Activated naive CD4-positive, alpha-beta T cell treated with anti-CD3 and anti-CD28 coated beads for 36 hours (primary cell): ENCODE measurements at regions of chr11 and their contacts with region 1.

Region 1: DNA sequence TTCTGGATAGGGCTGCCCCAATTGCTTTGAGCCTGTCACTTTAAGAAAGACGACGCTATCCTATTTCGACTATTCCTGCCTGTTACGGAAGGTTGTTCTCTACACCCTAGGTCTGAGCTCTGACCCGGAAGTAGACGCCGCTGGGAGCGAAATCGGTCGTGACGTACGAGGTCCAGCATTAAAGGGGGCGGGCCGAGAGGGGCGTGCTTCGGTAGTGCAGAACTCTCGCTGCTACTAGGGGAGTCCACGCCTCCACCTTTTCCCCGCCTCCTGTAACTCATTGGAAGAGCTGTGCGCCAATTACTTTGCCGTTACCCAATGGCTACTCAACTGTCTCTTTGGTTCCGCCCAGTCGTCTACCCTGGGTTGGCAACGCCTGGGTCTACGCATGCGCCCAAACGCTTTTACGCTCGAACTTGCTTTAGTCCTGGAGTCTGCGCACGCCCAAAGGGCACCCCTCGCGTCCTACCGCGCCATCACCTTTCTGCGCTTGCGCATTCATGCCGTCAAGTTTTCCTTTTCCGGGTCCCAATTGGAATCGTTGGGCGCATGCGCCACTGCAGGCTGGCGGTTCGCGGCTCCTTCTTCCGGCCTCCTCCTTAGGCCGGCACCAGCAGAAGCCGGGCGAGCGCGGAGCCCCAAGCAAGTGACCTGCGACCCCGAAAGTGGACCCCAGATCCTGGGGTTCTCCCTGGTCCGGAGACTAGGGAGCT is at the start of gene PCNX3:
- DNase-seq: peak; percentile 100
- H3K4me3 Mint-ChIP-seq: peak within 1 kb of the TSS; percentile 95
- H3K27ac Mint-ChIP-seq: peak within 1 kb of the TSS; percentile 98
- H3K4me1 Mint-ChIP-seq: peaks cover 54% of the 10 kb centered on the region
- H3K27me3 Mint-ChIP-seq: no peaks in the 10 kb centered on the region
- total RNA-seq, gene PCNX3: 21.6 to 24.7 TPM

Region 2: DNA sequence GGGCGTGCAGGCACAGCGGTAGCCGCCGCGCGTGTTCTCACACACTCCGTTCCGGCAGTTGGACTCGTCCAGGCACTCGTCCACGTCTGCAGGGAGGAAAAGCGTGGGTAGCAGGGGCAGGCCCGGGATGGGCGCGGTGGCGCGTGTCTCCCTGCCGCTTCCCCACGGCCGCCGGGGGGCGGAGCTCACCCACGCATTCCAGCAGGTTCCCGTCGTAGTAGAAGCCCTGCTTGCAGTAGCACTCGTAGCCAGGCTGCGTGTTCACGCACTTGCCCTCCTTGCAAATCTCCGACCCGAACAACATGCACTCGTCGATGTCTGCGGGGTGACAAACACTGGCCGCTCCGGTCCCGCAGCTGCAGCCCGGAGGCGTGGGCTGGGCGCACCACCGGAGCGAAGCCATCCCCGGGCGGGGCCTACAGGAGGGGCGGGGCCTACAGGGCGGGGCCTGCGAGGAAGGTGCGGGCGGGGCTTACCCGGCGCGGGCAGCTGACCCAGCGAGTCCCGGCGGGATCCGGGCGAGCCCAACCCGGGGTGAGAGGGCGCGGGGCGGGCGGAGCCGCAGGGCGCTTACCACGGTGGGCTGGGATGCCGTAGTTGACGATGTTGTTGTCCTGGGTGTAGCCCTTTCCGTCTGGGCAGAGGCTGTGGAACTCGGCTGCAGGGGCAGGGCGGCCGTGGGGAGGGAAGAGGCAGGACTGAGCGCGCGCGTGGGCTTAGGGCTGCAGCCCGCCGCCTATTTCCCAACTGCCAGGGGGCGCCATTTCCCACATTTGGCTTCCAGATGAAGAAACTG is 74.9 kb before region 1 on chr11:
- CTCF ChIA-PET with region 1: interaction called, 9 read pairs
- intact Hi-C with region 1: loop called (anchors 1 kb)
- DNase-seq: peak; percentile 93
- H3K4me3 Mint-ChIP-seq: peak overlapping the region; percentile 80
- H3K27ac Mint-ChIP-seq: peak overlapping the region; percentile 82
- H3K4me1 Mint-ChIP-seq: peaks cover 16% of the 10 kb centered on the region
- H3K27me3 Mint-ChIP-seq: no peaks in the 10 kb centered on the region

Region 3: DNA sequence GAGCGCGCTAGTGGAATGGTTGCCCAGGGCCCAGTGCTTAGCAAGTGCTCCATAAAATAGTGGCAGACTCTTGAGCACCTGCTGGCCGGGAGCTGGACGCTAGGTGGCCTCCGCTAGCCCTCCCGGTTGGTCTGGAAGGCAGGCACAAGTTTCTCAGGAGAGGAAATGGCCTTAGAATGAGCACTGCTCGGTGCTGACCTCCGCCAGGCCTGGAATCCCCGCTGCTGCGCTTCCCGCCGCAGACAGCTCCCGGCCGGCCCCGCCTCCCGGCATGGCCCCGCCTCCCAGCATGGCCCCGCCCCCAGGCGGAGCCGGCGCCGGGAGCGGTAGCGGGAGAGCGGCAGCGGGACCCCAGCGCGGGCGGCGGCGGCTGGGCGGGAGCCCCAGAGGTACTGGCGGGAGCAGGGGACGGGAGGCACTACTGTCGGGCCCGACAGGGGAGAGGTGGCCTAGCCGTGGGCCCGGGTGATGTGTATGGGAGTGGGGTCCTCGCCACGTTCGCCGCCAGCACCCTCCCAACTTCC is 22.5 kb after region 1 on chr11 and contains the start of gene SIPA1:
- CTCF ChIA-PET with region 1: interaction called, 4 read pairs
- intact Hi-C with region 1: loop called (anchors 1 kb)
- DNase-seq: peak; percentile 71
- H3K4me3 Mint-ChIP-seq: peak within 1 kb of the TSS; percentile 88
- H3K27ac Mint-ChIP-seq: peak within 1 kb of the TSS; percentile 91
- H3K4me1 Mint-ChIP-seq: peaks cover 44% of the 10 kb centered on the region
- H3K27me3 Mint-ChIP-seq: no peaks in the 10 kb centered on the region
- total RNA-seq, gene SIPA1: 146 to 150 TPM

Region 4: DNA sequence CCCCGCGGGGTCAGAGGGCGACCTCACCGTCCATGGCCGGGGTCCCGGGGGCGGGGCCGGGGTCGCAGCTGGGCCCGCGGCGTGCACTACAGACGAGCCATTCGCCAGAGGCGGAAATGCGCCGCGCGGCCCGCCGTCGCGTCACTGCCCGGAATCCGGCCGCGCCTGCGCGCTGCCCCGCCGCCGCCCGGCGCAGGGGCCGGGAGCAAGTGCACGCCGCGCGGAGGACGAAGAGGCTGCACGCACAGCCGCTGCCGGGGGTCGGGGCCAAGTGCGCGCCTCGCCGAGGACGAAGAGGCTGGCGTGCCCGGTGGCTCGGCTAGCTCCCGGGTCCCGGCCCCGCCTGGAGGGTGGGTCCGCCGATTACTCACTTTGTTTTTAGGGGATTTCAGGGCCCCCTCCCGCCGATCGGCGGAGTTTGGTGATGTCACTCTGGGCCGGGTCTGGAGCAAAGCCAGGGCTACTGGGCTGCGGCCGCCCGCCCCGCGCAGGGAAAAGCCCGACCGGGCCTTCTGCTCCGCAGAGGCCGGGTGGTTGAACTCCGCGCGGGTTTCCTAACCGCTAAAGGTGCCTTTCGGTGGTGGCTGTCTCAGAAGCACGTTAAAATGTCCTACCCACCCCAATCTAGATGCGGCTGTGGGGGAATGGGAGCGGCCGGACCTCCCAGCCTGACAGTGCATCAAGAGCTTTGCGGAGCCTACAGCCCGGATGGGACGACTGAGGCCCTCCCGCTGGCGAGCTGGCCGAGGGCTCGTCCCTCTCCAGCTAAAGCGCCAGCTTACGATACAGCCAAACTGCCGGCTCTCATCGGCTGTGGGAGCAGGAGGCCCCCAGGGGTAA is 47.6 kb after region 1 on chr11 and contains the start of gene RELA:
- CTCF ChIA-PET with region 1: no interaction called
- intact Hi-C with region 1: loop called (anchors 1 kb)
- DNase-seq: peak; percentile 95
- H3K4me3 Mint-ChIP-seq: peak within 1 kb of the TSS; percentile 85
- H3K27ac Mint-ChIP-seq: peak within 1 kb of the TSS; percentile 94
- H3K4me1 Mint-ChIP-seq: peaks cover 37% of the 10 kb centered on the region
- H3K27me3 Mint-ChIP-seq: no peaks in the 10 kb centered on the region
- total RNA-seq, gene RELA: 66.9 to 68.5 TPM

Region 5: DNA sequence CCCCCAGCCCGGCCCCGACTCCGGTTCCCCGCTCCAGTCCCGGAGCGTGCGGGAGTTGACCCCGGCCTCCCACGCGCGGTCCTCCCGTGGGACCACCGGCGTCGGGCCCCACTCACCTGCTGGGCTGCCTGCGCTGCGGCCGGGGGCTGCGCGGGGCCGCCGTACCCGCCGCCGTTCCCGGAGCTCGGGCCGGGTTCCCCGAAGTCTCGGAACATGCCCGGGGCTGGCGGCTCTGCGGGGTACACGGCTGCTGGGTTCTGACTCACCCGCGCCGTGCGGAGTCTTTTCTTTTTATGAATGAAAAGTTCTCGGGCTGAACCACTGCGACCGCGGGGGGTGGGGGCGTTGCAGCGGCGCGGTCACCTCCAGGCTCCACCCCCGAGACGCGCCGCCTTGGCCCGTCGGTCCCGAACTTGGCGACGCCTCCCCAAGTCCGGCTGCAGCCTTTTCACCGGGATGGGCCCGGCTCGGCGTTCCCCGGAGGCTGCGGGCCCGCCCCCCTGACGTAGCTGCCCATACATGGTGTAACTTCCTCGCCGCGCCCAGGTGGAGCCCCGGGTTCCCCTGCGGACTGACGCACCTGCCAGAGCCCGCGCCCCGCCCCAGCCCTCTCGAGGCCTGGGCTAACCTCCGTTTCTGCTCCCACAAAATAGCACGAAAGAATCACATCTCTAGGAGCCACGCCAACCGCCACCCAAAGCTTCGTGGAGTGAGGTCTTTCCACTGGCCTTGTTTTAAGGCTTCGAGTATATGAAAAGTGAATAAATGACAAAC is 284.9 kb after region 1 on chr11 and contains the start of gene FOSL1:
- CTCF ChIA-PET with region 1: no interaction called
- intact Hi-C with region 1: loop called (anchors 1 kb)
- DNase-seq: peak; percentile 96
- H3K4me3 Mint-ChIP-seq: peak within 1 kb of the TSS; percentile 83
- H3K27ac Mint-ChIP-seq: peak within 1 kb of the TSS; percentile 79
- H3K4me1 Mint-ChIP-seq: peaks cover 33% of the 10 kb centered on the region
- H3K27me3 Mint-ChIP-seq: peaks cover 2% of the 10 kb centered on the region
- total RNA-seq, gene FOSL1: 8.2 TPM